Breast epithelium (tissue), 4 donors: ENCODE measurements at regions of chr21 and their contacts with region 1.

Region 1: GRCh38 chr21:40507999-40508398 is 339.0 kb downstream of the DSCAM start:
- DNase-seq: no peak
- H3K4me3 ChIP-seq: no peak overlapping the region
- H3K27ac ChIP-seq: no peak overlapping the region
- H3K4me1 ChIP-seq: no peaks in the 10 kb centered on the region
- H3K27me3 ChIP-seq: no peaks in the 10 kb centered on the region
- CTCF ChIP-seq: no peak
- POLR2A ChIP-seq: no peak

Region 2: GRCh38 chr21:40282912-40283886 is 224.8 kb before region 1 on chr21:
- intact Hi-C with region 1: no loop called
- DNase-seq: no peak
- H3K4me3 ChIP-seq: no peak overlapping the region
- H3K27ac ChIP-seq: no peak overlapping the region
- H3K4me1 ChIP-seq: no peaks in the 10 kb centered on the region
- H3K27me3 ChIP-seq: peaks cover 0 to 6% of the 10 kb centered on the region in 2 donors
- CTCF ChIP-seq: no peak
- POLR2A ChIP-seq: no peak

Region 3: GRCh38 chr21:40556442-40556968 is 48.5 kb after region 1 on chr21:
- intact Hi-C with region 1: no loop called
- DNase-seq: no peak
- H3K4me3 ChIP-seq: no peak overlapping the region
- H3K27ac ChIP-seq: no peak overlapping the region
- H3K4me1 ChIP-seq: no peaks in the 10 kb centered on the region
- H3K27me3 ChIP-seq: no peaks in the 10 kb centered on the region
- CTCF ChIP-seq: no peak
- POLR2A ChIP-seq: no peak

Region 4: DNA sequence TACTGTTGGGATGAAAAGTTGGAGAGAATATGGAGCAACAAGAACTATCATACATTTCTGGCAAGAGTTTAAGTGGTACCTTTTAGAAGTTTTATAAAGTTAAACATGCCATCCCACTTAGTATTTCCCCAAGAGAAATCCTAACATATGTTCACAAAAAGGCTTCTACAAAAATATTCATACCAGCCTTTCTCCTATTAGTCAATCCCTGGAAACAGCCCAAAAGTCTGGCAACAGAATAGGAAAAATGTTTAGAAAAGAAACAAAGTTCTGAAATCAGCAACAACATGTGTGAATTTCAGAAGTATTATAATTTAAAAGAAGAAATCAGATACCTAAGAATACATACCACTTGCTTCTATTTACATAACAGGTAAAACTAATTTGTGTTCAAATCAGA is 68.0 kb after region 1 on chr21:
- intact Hi-C with region 1: loop called (anchors 2 kb)
- DNase-seq: no peak
- H3K4me3 ChIP-seq: no peak overlapping the region
- H3K27ac ChIP-seq: no peak overlapping the region
- H3K4me1 ChIP-seq: no peaks in the 10 kb centered on the region
- H3K27me3 ChIP-seq: no peaks in the 10 kb centered on the region
- CTCF ChIP-seq: no peak
- POLR2A ChIP-seq: no peak